Left colon (tissue), 2 donors: ENCODE measurements at regions of chr5 and their contacts with region 1.

Region 1: DNA sequence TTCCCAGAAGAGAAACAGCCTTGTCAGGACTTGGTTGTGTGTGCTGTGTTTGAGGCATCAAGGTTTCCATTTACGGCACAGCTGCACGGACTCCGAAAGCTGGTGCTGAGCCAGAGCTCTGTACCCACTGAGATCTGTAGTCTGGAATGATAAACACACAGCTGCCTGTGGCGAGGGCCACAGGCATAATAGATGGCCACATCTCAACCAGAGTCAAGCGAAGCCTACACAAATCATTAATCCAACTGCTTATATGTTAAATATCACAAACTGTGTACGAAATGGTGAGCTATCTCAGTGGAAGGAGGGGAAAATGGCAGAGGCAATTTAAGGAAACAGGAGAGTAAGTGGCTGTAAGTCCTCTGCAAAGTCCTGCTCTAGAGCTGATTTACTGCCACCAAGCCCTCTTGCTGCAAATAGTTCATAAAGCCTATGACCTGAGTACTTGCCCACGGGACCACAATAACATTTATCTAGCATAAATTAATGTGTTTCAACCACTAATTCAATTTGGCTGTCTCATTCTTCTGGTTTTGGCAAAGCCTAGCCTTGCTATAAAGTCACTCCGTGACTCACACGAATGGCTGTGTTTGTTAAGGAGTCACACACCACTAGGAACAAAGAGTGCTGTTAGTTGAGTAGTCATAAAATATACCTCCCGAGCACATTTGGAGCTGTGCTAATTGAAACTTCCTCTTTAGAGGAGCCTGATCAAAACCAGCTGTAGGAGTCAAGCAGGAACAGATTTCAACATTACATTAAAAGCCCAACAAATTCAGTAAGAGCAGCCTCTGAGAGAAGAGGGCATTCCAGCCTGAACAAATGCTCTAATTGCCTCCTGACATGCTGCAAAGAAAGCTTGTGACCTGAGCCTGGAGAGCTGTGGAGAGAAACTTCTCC is 738.6 kb upstream of the ZNF608 start:
- DNase-seq: peak; percentile 57 to 81
- ATAC-seq: peak; percentile 97

Region 2: DNA sequence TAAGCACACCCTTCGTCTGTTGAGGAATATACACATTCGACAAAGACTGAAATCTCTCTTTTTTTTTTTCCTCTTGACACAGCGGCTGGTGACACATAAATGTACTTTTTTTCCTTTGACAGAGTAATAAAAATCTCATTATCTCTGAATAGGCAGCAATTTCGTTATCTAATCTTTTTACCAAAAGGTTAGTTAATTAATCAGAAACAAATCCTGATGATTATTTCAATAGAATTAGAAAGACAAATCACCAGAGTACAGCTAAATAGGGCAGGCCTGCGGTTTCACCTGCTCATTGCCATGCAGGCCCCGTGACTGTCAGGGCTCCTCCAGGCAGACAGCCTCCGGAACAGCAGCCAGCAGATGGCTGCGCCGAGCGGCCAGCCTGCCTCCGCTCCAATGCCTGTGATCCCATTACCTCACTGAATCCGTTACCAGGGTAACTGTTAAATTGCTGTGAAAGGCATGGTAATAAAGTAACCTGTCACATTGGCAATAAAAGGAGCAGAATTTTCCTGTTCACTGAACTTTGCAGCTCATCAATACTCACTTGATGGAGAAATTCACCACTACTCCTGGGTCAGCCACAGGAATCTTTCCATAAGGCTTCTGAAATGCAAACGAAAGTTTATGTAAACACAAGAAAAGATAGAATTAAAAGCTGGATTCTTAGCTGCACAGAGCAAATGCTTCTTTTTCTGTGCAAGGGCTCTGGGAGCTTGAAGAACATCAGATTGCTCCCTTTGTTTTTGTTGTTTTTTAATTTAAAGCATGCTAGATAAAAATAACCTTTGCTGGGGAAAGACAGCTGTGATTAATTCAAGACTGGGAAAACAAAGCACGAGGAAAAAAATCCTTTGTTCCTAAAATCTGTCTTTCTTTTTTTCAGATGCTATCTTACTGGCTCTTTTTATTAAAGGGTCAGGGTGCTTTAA is 72.2 kb before region 1 on chr5:
- intact Hi-C with region 1: loop called in 1 of 2 experiments (anchors 5 kb)
- DNase-seq: peak; percentile 79 to 85
- ATAC-seq: peak; percentile 85

Region 3: DNA sequence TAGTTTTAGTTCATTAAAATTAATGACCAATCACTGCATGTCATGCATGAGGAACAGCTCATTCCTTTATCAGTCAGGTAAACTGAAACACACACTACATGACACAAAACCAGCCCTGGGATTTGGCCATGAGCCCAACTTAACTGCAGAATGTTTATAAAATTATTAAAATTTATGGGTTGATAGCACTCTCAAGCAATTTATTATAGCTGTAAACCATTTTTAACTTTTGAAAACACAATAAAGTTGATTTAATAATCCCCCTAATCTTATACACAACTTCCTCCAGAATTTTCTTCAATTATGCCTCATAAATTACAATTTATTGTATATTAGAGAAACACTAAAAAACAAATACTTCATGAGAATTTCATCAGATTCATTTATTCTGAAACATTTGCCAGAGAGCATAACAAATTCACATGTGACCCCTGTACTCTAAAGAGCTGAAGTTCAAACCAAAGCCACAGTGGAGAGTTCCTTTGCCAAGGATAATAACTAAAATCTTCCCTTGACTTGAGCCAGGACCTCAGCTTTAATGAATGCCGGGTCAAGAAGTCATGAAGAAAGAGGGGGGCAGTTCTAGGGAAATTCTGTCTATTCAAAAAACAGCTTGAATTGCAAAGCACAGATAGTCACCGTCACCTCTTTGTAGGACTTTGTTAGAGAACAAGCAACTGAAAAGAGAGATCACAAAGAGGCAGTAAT is 174.5 kb after region 1 on chr5:
- intact Hi-C with region 1: no loop called
- DNase-seq: no peak
- ATAC-seq: no peak

Region 4: DNA sequence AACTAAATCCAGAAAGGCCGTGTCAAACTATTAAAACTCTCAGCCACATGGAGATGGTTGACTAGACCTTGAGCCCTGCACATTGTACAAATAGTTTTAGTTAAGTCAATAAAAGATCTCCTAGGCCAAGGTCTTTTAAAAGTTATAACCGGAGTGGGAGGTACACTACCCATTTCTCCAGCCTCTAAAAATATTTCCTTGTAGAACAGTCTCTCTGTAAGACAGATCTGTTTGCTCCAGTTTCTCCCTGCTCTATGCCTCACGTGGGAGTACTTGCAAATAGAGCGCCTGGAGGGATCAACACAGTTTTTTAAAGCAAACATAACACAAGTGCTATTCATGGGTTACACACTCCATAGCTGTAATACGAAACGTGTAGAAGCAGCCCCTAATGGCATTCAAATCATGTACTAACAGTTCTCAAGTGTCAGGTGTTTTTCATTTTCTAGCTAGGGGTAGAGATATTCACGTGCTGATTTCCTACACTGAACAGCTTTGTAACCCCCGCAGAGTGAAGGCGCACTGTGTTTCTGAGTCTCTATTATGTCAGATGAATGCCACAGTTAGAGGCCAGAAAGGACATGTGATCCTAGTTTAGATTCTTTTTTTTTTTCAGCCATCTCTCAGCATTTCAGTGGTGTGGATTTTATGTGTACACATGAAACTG is 234.8 kb after region 1 on chr5:
- intact Hi-C with region 1: no loop called
- DNase-seq: peak in 1 of 2 donors; percentile 36
- ATAC-seq: peak; percentile 97